AG04450 (cell line): ENCODE measurements at regions of chr19 and their contacts with region 1.

Region 1: DNA sequence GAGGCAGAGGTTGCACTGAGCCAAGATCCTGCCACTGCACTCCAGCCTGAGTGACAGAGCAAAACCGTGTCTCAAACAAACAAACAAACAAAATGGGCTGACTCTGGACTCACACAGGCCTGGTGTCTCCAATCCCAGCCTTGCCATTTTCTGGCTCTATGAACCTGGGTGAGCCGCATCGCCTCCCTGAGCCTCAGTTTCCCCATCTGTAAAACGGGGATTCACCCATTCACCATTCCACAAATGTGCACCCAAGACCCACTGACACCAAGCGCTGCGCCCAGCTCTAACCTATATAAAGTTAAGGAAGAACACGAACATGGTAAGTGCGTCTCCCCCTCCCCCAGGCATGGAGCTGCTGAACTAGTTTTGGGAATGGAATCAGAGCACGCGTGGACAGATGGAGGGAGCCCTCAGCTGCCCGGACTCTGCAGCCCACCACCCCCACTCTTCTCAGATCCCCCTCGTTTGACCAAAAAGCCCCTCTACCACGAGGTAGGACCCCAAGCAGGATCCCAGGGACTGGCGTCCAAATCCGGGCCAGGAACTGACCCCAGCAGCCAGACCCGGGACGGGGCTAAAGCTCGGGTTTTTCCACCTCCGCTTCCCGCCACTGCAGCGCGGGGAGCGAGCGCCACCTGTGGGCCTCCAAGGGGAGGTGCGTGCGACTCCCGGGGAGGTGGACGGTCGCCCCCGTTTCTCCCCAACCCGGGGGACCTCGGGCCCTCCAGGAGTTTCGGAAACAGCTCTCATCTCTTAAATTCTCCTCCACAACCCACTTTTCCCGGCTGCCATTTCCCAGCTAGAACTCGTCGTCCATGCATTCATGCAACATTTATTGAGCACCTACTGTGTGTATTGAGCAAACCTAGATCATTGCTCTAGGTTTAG is 33.0 kb upstream of the ADGRE5 start:
- DNase-seq: no peak
- H3K4me3 ChIP-seq: peak overlapping the region; percentile 46
- H3K27ac ChIP-seq: no peak overlapping the region
- H3K27me3 ChIP-seq: peaks cover 28% of the 10 kb centered on the region
- CTCF ChIP-seq: peak; percentile 99

Region 2: DNA sequence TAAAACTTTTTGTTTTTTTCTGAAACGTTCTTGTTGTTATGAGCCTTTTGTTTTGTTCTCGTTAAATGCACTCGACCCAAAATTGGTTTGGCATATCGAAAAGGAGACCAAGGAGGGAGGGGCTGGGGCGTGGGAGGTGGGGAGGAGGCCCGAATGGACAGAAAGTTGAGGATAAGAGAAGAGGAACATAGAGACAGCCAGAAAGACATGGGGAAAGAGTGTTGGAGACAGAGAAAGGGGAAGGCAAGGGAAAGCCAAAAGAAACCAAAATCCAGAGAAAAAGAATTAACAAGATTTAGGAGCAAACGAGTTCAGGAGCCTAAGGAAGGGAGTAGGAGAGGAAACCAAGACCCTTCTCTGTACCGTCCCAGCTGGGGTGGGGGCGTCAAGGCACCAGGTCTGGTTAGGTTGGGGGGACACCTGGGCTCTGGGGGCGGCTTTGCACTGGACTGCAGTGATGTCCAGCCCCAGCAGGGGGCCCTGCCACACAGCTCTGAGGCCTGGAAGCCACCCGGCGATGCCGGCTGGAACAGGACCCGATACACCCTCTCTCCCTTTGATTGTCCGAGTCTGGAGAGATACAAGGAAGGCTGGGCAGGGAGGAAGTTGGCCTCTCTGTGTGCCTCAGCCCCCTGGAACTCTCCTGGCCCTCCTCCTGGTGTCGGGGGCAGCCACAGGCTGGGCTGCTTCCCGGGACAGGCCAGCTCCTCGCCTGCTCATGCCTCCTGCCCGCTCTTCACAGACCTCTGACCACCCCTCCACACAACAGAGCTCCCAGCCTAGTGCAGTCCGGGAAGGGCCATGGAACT is 200.2 kb before region 1 on chr19:
- CTCF ChIA-PET with region 1: interaction called, 25 read pairs
- POLR2A ChIA-PET with region 1: no interaction called
- DNase-seq: peak; percentile 15
- H3K4me3 ChIP-seq: no peak overlapping the region
- H3K27ac ChIP-seq: no peak overlapping the region
- H3K27me3 ChIP-seq: no peaks in the 10 kb centered on the region
- CTCF ChIP-seq: peak; percentile 89

Region 3: GRCh38 chr19:14198384-14199376 is 149.6 kb before region 1 on chr19:
- CTCF ChIA-PET with region 1: interaction called, 87 read pairs
- POLR2A ChIA-PET with region 1: interaction called, 5 read pairs
- DNase-seq: no peak
- H3K4me3 ChIP-seq: no peak overlapping the region
- H3K27ac ChIP-seq: no peak overlapping the region
- H3K27me3 ChIP-seq: peaks cover 7% of the 10 kb centered on the region
- CTCF ChIP-seq: no peak

Region 4: DNA sequence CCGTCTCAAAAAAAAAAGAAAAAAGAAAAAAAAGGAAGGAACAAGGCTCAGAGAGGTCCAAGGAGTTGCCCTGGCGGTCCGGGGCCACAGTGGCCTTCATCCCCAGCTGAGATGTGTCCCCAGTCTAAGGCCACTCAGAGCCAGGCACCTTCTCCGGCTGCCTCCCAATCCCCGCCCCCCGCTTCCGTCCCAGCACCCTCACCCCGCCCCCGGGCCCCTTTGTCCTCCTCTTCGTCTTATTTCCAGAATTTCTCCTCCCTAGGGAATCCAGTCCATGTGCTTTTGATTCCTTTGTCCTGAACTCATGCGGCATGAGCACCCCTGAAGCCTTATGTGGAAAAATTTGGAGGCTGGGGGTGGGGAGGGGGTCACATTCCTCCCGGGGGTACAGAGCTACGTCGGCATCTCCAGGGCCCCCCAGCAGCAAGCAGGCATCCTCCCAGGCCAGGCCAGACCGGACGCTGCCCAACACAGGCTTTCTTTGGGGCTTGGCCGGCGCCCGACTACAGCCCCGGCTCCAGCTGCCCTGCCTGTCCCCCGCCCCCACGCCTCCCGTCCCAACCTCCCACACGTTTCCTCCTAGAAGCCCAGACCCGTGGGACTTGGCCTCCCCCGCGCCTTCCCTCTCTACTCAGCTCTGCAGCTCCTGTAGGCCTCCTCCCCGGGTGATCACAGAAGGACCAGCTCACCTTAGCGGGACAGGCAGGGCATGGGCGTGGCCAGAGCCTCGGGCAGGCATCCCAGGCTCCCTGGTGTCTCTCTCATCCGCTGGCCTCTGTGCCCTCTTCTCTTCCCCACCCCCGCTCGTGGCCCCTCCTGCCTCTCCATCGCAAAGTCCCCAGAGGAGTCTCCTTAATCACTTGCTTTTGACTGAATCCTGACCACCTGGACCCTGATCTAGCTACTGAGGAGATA is 15.2 kb after region 1 on chr19:
- CTCF ChIA-PET with region 1: interaction called, 18 read pairs
- POLR2A ChIA-PET with region 1: interaction called, 4 read pairs
- DNase-seq: no peak
- H3K4me3 ChIP-seq: peak overlapping the region; percentile 41
- H3K27ac ChIP-seq: peak overlapping the region; percentile 31
- H3K27me3 ChIP-seq: no peaks in the 10 kb centered on the region
- CTCF ChIP-seq: no peak